Activated CD8-positive, alpha-beta T cell treated with anti-CD3 and anti-CD28 coated beads, Interleukin-2, amount 10 ng/mL, durations not matched to agents 7 days and 5 days (primary cell): ENCODE measurements at regions of chr9 and their contacts with region 1.

Region 1: GRCh38 chr9:34637356-34638137 is at the start of gene SIGMAR1:
- DNase-seq: peak; percentile 94
- ATAC-seq: peak; percentile 91
- H3K4me3 Mint-ChIP-seq: peak within 1 kb of the TSS; percentile 85
- H3K27ac Mint-ChIP-seq: peak within 1 kb of the TSS; percentile 87
- H3K4me1 Mint-ChIP-seq: peaks cover 38% of the 10 kb centered on the region
- H3K27me3 Mint-ChIP-seq: no peaks in the 10 kb centered on the region
- total RNA-seq, gene SIGMAR1: 66.7 to 66.9 TPM

Region 2: DNA sequence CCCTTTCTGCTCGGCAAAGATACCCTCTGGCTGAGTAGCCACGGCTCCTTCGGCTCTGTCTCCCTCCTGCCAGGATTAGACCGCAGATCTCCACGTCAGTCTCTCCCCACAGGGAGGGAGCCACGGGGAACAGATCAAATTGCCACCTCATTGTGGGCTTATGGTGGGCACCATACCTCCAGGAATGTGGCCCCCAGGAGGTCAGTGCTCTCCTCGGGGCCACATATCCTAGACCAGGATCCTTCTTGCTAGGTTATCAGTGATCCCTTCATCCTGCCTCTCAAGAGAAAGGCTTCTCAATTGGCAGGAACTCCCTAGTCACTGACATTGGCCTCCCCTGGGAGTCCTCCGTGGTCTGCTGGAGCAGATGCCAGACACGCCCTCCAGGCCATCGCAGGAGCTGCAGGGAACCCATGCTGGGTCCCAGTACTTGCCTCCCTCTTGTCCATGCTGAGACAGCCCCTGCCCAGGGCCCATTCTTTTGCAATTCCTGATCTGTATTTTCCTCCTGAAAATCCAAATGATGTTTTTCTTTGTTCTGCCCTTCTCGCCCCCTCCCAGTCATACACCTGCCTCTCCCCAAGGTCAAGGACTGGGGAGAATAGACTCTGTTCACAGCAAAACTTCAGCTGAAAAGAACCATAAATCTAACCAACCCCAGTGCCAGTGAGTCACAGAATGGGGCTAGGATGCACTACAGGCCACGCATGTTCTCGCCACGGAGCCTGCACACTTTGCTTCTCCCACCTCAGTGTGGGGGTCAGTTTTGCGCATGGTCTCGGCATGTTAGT is 83.1 kb before region 1 on chr9:
- CTCF ChIA-PET with region 1: no interaction called
- POLR2A ChIA-PET with region 1: no interaction called
- DNase-seq: no peak
- ATAC-seq: no peak
- H3K4me3 Mint-ChIP-seq: no peak overlapping the region
- H3K27ac Mint-ChIP-seq: no peak overlapping the region
- H3K4me1 Mint-ChIP-seq: no peaks in the 10 kb centered on the region
- H3K27me3 Mint-ChIP-seq: peaks cover 5% of the 10 kb centered on the region

Region 3: GRCh38 chr9:34603610-34604231 is 33.8 kb before region 1 on chr9:
- CTCF ChIA-PET with region 1: interaction called, 51 read pairs
- POLR2A ChIA-PET with region 1: no interaction called
- DNase-seq: peak; percentile 86
- ATAC-seq: peak; percentile 95
- H3K4me3 Mint-ChIP-seq: no peak overlapping the region
- H3K27ac Mint-ChIP-seq: no peak overlapping the region
- H3K4me1 Mint-ChIP-seq: no peaks in the 10 kb centered on the region
- H3K27me3 Mint-ChIP-seq: peaks cover 8% of the 10 kb centered on the region

Region 4: GRCh38 chr9:34611829-34612630 is 25.5 kb before region 1 on chr9 and contains the start of gene RPP25L:
- CTCF ChIA-PET with region 1: interaction called, 171 read pairs
- POLR2A ChIA-PET with region 1: interaction called, 11 read pairs
- DNase-seq: peak; percentile 86
- ATAC-seq: peak; percentile 95
- H3K4me3 Mint-ChIP-seq: peak within 1 kb of the TSS; percentile 88
- H3K27ac Mint-ChIP-seq: peak within 1 kb of the TSS; percentile 95
- H3K4me1 Mint-ChIP-seq: peaks cover 18% of the 10 kb centered on the region
- H3K27me3 Mint-ChIP-seq: no peaks in the 10 kb centered on the region
- total RNA-seq, gene RPP25L: 23.2 to 26.4 TPM

Region 5: DNA sequence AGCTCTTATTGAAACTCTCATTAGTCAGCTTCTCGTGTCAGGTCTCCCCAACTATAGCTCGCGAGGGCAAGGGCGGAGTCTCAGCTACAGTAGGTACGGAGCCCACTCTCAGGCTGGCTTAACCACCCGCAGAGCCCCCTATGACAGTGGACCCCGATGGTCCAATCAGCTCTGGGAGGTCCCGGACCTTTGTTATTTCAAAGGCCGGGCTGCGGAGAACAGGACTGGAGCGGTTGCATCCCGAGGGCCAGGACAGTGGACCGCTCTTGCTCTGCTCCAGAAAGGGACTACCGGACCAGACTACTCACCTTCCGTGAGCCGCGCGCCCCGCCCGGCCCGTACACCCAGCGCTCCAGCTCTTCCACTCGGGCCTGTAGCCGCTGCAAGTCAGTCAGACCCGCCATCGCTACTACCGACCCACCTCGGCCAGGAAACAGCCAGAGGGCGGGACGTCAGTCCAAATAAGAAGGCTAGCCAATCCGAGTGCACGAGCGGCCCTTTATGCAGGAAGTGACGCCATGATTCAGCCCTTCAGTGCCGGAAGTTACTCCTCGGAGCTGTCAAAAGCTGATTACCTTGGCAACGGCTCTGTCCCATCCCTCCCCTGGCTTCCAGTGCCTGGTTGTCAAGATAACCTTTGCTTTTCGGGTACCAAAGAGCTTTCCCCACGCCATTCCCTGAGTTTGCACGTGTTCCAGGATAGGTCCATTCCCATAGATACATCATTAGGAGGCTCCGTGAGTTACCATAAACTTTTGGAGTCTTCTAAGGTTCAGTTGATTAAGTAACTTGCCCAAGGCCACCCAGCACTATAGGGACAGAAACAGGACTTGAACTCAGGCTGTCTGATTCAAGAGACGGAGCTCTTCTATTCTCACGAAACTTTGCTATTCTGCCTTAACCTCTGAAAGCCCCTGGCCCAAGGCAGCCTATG is 17.2 kb before region 1 on chr9 and contains the start of gene DCTN3:
- CTCF ChIA-PET with region 1: interaction called, 171 read pairs
- POLR2A ChIA-PET with region 1: interaction called, 19 read pairs
- DNase-seq: peak; percentile 96
- ATAC-seq: peak; percentile 98
- H3K4me3 Mint-ChIP-seq: peak within 1 kb of the TSS; percentile 90
- H3K27ac Mint-ChIP-seq: peak within 1 kb of the TSS; percentile 86
- H3K4me1 Mint-ChIP-seq: peaks cover 32% of the 10 kb centered on the region
- H3K27me3 Mint-ChIP-seq: peaks cover 30% of the 10 kb centered on the region
- total RNA-seq, gene DCTN3: 134 to 140 TPM

Region 6: DNA sequence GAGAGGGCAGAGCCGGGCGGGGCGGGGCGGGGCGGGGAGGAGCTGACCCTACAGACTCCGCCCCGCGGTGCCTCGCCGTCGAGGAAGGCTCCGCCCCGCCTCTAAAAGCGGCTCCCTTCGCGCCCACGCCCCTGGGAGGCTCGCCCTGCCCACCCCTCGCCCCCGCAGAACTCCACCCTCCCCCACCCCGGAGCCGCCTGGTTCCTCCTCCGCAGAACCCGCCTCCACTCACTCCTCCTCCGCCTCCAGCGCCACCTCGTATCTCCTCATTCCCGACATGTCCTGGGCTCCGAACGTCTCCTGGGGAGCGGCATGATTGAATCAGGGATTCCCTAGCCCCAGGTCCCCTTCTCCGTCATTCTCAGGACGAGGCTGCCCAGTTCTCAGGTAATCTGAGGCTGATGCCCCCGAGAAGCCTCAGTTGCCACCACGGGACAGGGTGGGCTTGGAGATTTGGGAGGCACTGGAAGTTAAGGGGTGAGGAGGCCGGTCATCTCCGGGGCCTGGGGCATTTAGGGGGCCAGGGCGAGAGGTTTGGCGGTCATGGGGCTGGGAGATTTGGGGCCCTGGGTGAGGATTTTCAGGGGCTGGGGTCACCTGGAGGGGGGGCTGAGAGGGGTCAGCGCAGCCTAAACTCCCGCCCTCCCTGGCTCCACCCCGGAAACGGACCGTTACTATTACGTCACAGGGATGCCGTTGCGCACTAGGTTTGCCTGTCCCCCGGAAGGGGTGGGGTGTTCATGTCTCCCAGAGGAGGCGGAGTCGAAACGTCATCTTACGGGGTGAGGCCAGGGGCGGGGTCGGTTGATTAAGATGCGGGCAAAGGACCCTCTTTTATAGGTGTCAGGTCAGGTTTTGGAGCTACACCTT is 28.1 kb after region 1 on chr9:
- CTCF ChIA-PET with region 1: interaction called, 22 read pairs
- POLR2A ChIA-PET with region 1: interaction called, 10 read pairs
- DNase-seq: peak; percentile 91
- ATAC-seq: peak; percentile 76
- H3K4me3 Mint-ChIP-seq: peak overlapping the region; percentile 84
- H3K27ac Mint-ChIP-seq: peak overlapping the region; percentile 93
- H3K4me1 Mint-ChIP-seq: peaks cover 43% of the 10 kb centered on the region
- H3K27me3 Mint-ChIP-seq: peaks cover 2% of the 10 kb centered on the region

Region 7: DNA sequence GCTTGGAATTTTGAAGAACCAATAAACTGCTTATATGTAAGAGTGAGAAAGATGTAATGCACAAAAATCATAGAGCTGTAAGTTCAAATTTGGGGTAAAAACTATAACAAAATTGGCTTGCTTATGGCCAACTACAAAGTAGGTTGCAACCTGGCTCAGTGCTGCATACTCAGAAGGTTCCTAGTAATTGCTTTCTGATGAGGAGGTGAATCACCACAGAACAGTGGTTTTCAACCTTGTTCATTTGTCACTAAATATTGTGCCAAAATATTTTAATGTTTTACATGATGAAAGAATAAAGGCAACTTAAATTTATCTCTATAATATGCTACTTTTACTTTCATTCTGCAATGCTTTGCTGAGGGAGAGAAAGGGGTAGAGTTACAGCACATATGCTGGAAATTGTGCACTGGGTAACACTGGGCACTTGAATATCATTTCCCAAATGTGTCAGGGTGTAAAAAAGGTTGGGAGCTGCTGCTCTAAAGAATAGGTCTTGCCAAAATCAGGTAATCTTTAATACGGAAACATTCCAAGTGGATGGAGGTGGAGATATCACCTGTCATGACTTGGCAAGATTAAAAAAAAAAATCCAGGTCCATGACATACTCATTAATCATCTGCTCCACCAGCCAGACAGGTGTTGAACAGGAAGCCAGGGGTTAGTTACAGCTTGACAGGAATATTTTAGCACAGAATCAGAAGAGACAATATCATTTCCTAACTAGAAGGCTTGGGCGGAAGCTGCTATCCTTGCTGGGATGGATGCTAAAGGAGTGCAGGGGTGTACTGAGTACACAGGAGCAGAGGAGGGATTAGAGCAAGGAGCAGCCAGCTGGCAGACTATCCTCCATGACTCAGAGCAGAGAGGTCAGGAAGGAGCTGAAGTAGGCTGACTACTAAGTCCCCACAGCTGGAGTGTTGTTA is 107.0 kb after region 1 on chr9:
- CTCF ChIA-PET with region 1: no interaction called
- POLR2A ChIA-PET with region 1: no interaction called
- DNase-seq: no peak
- ATAC-seq: no peak
- H3K4me3 Mint-ChIP-seq: no peak overlapping the region
- H3K27ac Mint-ChIP-seq: no peak overlapping the region
- H3K4me1 Mint-ChIP-seq: peaks cover 4% of the 10 kb centered on the region
- H3K27me3 Mint-ChIP-seq: peaks cover 17% of the 10 kb centered on the region